Activated CD8-positive, alpha-beta T cell treated with anti-CD3 and anti-CD28 coated beads for 36 hours (primary cell): ENCODE measurements at regions of chr10 and their contacts with region 1.

Region 1: DNA sequence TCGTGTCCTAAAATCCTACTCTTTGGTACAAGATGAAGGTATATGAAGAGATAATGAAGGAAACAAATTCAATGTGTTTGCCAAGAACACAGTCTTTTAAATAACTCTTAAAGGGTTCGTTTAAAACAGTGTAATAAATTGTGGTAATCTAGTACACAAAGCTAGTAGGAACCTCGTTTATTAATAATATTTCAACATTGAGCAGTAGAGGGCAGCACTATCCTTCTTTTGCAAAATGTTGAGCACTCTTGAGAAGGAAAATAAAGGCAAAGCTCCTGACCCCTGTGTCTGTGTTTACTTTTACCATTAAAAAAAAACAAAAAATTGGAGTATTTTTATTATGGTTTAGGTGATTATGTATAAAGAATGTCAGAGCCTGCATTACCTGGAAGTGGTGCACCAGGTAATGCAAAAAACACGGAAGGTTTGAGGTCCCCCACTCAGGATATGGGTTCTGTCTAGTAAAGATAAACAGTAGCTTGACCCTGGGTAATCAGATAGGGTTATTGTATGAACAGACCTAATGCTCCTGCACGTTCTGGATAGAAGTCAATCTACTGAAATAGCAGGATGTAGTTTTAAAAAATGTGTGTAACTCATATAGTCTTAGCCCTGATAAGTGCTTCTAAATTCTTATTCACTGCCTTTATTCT is 5.7 kb upstream of the GOT1 start:
- DNase-seq: no peak
- ATAC-seq: no peak
- H3K4me3 Mint-ChIP-seq: no peak overlapping the region
- H3K27ac Mint-ChIP-seq: no peak overlapping the region
- H3K4me1 Mint-ChIP-seq: peaks cover 17% of the 10 kb centered on the region
- H3K27me3 Mint-ChIP-seq: no peaks in the 10 kb centered on the region
- CTCF ChIP-seq: peak; percentile 72

Region 2: GRCh38 chr10:99395750-99396445 is 40.2 kb before region 1 on chr10:
- CTCF ChIA-PET with region 1: interaction called, 22 read pairs
- POLR2A ChIA-PET with region 1: no interaction called
- intact Hi-C with region 1: no loop called
- DNase-seq: no peak
- ATAC-seq: no peak
- H3K4me3 Mint-ChIP-seq: no peak overlapping the region
- H3K27ac Mint-ChIP-seq: no peak overlapping the region
- H3K4me1 Mint-ChIP-seq: peaks cover 4% of the 10 kb centered on the region
- H3K27me3 Mint-ChIP-seq: no peaks in the 10 kb centered on the region
- CTCF ChIP-seq: no peak

Region 3: GRCh38 chr10:99450624-99451498 is 14.7 kb after region 1 on chr10:
- CTCF ChIA-PET with region 1: interaction called, 64 read pairs
- POLR2A ChIA-PET with region 1: no interaction called
- intact Hi-C with region 1: no loop called
- DNase-seq: no peak
- ATAC-seq: no peak
- H3K4me3 Mint-ChIP-seq: no peak overlapping the region
- H3K27ac Mint-ChIP-seq: no peak overlapping the region
- H3K4me1 Mint-ChIP-seq: no peaks in the 10 kb centered on the region
- H3K27me3 Mint-ChIP-seq: peaks cover 36% of the 10 kb centered on the region
- CTCF ChIP-seq: no peak

Region 4: GRCh38 chr10:99489271-99489670 is 53.2 kb after region 1 on chr10:
- CTCF ChIA-PET with region 1: no interaction called
- POLR2A ChIA-PET with region 1: no interaction called
- intact Hi-C with region 1: no loop called
- DNase-seq: no peak
- ATAC-seq: no peak
- H3K4me3 Mint-ChIP-seq: no peak overlapping the region
- H3K27ac Mint-ChIP-seq: no peak overlapping the region
- H3K4me1 Mint-ChIP-seq: no peaks in the 10 kb centered on the region
- H3K27me3 Mint-ChIP-seq: peaks cover 30% of the 10 kb centered on the region
- CTCF ChIP-seq: no peak

Region 5: DNA sequence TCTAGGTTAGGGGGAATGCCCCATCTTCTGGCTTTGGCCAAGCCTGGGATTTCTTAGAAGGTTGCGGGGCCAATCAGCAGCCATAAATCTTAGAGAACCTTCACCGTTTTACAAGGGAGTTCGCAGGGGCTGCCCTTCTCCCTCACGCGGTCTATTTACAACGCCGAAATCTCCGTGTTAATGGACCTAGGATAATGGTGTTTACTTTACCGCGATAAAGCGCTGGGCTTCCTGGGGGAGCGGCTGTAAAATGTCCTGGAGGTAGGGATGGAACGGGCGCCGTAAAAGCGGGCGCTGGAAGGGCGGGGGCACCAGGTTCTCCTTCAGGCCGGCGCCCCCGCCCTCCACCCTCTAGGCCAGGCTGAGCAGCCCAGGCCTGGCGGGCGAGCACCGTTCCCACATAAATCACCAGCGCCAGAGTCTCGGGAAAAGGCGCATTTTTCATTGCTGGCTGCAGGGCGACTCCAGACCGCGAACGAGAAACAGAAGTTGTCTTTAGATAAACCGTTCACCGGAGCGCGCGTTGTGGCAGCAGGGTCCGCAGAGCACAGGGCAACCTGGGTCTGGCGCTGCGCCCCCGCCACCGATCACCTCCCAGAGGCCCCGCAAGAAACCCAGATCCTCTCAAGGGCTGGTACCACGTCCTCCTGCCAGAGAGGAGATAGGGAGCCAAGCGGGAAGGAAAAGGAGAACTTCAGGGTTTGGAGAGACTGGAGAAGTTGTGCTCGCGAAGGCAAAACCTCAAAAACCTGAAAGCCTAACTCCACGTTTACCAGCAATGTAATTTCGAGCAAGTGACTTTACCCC is 84.1 kb after region 1 on chr10:
- CTCF ChIA-PET with region 1: no interaction called
- POLR2A ChIA-PET with region 1: no interaction called
- intact Hi-C with region 1: no loop called
- DNase-seq: no peak
- ATAC-seq: no peak
- H3K4me3 Mint-ChIP-seq: no peak overlapping the region
- H3K27ac Mint-ChIP-seq: no peak overlapping the region
- H3K4me1 Mint-ChIP-seq: peaks cover 6% of the 10 kb centered on the region
- H3K27me3 Mint-ChIP-seq: peaks cover 62% of the 10 kb centered on the region
- CTCF ChIP-seq: no peak

Region 6: GRCh38 chr10:99548041-99548530 is 112.0 kb after region 1 on chr10:
- CTCF ChIA-PET with region 1: interaction called, 28 read pairs
- POLR2A ChIA-PET with region 1: no interaction called
- intact Hi-C with region 1: loop called (anchors 10 kb)
- DNase-seq: peak; percentile 41
- ATAC-seq: peak; percentile 65
- H3K4me3 Mint-ChIP-seq: no peak overlapping the region
- H3K27ac Mint-ChIP-seq: no peak overlapping the region
- H3K4me1 Mint-ChIP-seq: no peaks in the 10 kb centered on the region
- H3K27me3 Mint-ChIP-seq: peaks cover 47% of the 10 kb centered on the region
- CTCF ChIP-seq: peak; percentile 21

Region 7: GRCh38 chr10:99711129-99711719 is 275.1 kb after region 1 on chr10:
- CTCF ChIA-PET with region 1: interaction called, 10 read pairs
- POLR2A ChIA-PET with region 1: no interaction called
- intact Hi-C with region 1: no loop called
- DNase-seq: peak; percentile 56
- ATAC-seq: peak; percentile 72
- H3K4me3 Mint-ChIP-seq: no peak overlapping the region
- H3K27ac Mint-ChIP-seq: no peak overlapping the region
- H3K4me1 Mint-ChIP-seq: peaks cover 10% of the 10 kb centered on the region
- H3K27me3 Mint-ChIP-seq: no peaks in the 10 kb centered on the region
- CTCF ChIP-seq: peak; percentile 59